Esophagus muscularis mucosa (tissue), 4 donors: ENCODE measurements at regions of chr6 and their contacts with region 1.

Region 1: DNA sequence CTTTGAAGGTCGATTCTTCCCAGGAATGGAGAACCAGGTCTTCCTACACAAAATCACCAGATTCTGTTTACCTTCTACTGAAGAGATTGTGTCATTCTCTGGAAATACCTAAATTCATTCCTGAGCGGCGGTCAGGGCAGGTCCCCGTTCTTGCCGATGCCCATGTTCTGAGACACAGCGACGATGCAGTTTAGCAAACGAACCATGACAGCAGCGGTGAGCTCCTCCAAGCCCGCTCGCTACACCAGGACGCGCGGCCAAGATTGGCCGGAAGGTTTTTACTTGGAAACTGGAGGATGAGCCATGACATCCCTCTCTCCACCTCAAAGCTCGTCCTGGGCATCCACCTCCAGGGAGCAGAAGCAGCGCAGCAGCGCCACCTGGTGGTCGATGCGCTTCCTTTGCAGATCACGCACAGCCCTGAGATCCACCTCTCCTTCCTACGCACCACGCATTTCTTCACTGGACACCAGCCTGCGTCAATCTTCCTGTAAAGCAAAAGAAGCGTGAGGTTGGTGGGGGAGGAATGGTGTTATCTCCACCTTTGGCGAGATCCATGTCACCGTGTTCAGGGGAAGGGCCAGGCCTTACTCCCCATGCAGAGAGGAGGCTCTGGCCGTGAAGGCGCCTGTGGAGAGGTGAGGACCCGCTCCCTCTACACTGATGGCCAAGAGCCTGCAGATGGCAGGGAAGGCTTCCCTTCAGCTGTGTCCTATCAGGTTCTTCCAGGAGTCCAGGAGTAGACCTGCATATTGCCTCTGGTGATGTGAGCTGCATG is 9.9 kb upstream of the HLA-B start:
- DNase-seq: peak; percentile 97
- H3K4me3 ChIP-seq: peak overlapping the region; percentile 36 to 48 (median 39)
- H3K27ac ChIP-seq: no peak overlapping the region
- H3K4me1 ChIP-seq: peaks cover 0 to 11% (median 4%) of the 10 kb centered on the region in 4 donors
- H3K27me3 ChIP-seq: peaks cover 0 to 42% (median 1%) of the 10 kb centered on the region in 4 donors
- CTCF ChIP-seq: peak; percentile 87 to 95 (median 94)
- EP300 ChIP-seq: no peak
- POLR2A ChIP-seq: no peak

Region 2: DNA sequence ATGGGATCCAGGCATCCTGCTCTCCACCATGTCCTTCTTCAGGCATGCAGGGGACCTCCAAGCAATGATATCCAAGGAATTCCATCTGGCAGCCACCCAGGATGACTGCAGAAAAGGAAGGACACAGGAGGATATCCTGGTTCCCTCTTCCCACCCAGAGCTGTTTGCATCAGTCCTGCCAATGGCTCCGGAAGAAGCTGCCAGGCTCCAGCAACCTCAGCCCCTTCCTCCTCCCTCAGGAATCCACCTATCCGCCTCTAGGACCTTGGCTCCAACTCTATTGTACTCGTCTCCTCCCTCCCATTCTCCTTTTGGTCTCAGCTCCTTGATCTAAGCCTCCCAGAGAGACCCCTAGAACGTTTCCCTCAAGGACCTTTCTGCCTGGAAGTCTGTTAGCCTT is 227.3 kb before region 1 on chr6:
- intact Hi-C with region 1: loop called (anchors 2 kb)
- DNase-seq: no peak
- H3K4me3 ChIP-seq: no peak overlapping the region
- H3K27ac ChIP-seq: no peak overlapping the region
- H3K4me1 ChIP-seq: peaks cover 13 to 33% (median 32%) of the 10 kb centered on the region in 4 donors
- H3K27me3 ChIP-seq: peaks cover 0 to 7% (median 0%) of the 10 kb centered on the region in 4 donors
- CTCF ChIP-seq: no peak
- EP300 ChIP-seq: no peak
- POLR2A ChIP-seq: no peak

Region 3: DNA sequence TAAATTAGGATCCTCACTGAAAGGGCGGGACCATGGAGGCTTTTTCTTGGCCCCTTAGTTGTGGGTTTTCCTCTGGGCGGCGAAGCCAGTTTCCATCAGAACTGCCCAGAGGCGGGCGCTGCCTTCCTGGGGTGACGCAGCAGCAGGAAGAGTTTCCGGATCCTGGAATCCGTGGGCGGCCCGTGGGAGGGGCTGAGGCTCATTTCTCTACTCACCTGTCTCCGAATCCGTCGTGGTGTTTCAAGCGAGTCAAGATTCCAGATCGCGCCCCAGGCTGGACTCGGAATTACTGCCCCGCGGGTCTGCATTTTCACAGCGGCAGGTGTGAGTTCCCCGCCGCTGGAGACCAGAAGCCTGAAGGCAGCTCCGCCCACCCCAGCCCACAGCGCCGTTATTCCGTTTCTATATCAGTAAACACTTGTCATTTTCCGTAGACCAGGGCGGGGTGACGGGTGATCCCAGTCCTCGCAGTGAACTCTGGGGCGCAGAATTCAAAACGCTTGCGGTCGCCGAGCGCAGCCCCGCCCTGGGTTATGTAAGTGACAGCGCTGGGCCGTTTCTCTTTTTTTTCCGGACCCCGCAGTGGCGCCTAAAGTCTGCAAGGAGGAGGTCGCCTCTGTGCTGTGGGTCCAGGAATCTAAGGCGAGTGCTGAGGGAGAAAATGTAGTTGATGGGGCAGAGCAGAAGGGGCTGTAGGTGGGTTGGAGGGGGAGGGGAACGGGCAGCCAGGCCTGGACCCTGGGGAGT is 169.2 kb before region 1 on chr6:
- intact Hi-C with region 1: loop called (anchors 2 kb)
- DNase-seq: peak; percentile 98
- H3K4me3 ChIP-seq: peak overlapping the region; percentile 66 to 85 (median 70)
- H3K27ac ChIP-seq: peak overlapping the region; percentile 92 to 97 (median 93)
- H3K4me1 ChIP-seq: peaks cover 18 to 48% (median 37%) of the 10 kb centered on the region in 4 donors
- H3K27me3 ChIP-seq: no peaks in the 10 kb centered on the region
- CTCF ChIP-seq: peak in 1 of 3 experiments; percentile 4
- EP300 ChIP-seq: no peak
- POLR2A ChIP-seq: peak; percentile 88

Region 4: GRCh38 chr6:31271641-31272357 is 95.1 kb before region 1 on chr6 and contains the start of gene HLA-C:
- intact Hi-C with region 1: loop called (anchors 5 kb)
- DNase-seq: peak; percentile 98
- H3K4me3 ChIP-seq: peak within 1 kb of the TSS; percentile 57 to 94 (median 78)
- H3K27ac ChIP-seq: peak within 1 kb of the TSS; percentile 78 to 99 (median 96)
- H3K4me1 ChIP-seq: peaks cover 0 to 22% (median 11%) of the 10 kb centered on the region in 4 donors
- H3K27me3 ChIP-seq: no peaks in the 10 kb centered on the region
- CTCF ChIP-seq: peak in 1 of 3 experiments; percentile 21
- EP300 ChIP-seq: no peak
- POLR2A ChIP-seq: peak; percentile 67
- total RNA-seq, gene HLA-C: 251 to 549 (median 296) TPM